Activated CD8-positive, alpha-beta T cell treated with anti-CD3 and anti-CD28 coated beads for 36 hours (primary cell): ENCODE measurements at regions of chr7 and their contacts with region 1.

Region 1: DNA sequence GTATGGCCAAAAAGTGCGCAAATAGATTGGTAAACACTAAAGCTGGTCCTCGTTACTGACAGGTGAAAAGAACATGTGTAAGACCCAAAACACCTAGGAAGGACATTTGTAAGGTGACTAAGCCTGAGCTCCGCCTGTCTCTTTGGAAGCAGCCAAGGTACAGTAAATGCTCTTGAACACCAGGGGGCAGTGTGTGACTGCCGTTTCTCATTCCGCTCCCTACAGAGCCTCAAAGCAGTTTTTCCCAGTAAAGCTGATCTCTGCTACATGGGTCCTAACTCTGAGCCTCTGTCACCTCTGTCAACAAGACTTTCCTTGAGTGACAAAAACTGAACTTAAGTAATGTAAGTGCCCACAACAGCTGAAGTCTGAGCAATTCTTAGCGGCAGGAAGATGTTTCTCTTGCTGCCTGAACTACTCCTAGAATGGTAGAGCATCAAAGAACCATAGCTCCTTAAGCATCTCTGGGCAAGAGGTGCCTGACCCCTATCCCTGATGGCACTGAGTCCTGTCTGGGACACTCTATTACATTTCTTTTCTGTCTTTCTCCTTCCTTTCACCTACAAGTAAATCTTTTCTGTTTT is 238.0 kb upstream of the INHBA start:
- DNase-seq: peak; percentile 60
- ATAC-seq: peak; percentile 83
- H3K4me3 Mint-ChIP-seq: no peak overlapping the region
- H3K27ac Mint-ChIP-seq: no peak overlapping the region
- H3K4me1 Mint-ChIP-seq: peaks cover 8% of the 10 kb centered on the region
- H3K27me3 Mint-ChIP-seq: peaks cover 37% of the 10 kb centered on the region
- CTCF ChIP-seq: peak; percentile 73

Region 2: DNA sequence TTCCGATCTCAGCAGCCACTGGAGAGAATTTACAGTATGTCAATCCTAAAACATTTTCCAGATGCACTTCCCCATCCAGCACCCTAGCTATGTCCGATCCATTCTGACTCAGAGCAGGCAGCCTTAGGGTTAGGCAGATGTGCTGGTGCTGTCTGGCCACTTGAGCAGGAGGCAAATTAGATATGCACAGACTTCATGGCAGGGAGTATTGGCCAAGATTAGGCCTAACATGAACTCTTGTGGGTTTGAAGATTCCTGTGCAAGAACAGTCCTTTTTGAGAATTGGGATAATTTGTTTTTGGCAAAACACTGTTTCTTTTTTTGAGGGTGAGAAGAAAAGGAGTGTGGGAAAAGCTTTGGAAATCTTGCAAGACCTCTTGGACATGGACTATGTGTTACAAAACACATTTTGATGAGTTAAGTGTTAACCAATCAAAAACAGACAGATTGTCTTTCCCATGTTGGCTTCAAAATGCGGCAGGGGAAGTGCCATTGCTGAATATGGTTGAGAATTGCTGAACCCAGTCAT is 19.3 kb before region 1 on chr7:
- CTCF ChIA-PET with region 1: interaction called, 20 read pairs
- POLR2A ChIA-PET with region 1: no interaction called
- intact Hi-C with region 1: no loop called
- DNase-seq: no peak
- ATAC-seq: no peak
- H3K4me3 Mint-ChIP-seq: no peak overlapping the region
- H3K27ac Mint-ChIP-seq: no peak overlapping the region
- H3K4me1 Mint-ChIP-seq: no peaks in the 10 kb centered on the region
- H3K27me3 Mint-ChIP-seq: peaks cover 25% of the 10 kb centered on the region
- CTCF ChIP-seq: no peak

Region 3: GRCh38 chr7:41955893-41956675 is 15.2 kb after region 1 on chr7:
- CTCF ChIA-PET with region 1: interaction called, 14 read pairs
- POLR2A ChIA-PET with region 1: no interaction called
- intact Hi-C with region 1: no loop called
- DNase-seq: no peak
- ATAC-seq: no peak
- H3K4me3 Mint-ChIP-seq: no peak overlapping the region
- H3K27ac Mint-ChIP-seq: no peak overlapping the region
- H3K4me1 Mint-ChIP-seq: no peaks in the 10 kb centered on the region
- H3K27me3 Mint-ChIP-seq: peaks cover 30% of the 10 kb centered on the region
- CTCF ChIP-seq: no peak

Region 4: DNA sequence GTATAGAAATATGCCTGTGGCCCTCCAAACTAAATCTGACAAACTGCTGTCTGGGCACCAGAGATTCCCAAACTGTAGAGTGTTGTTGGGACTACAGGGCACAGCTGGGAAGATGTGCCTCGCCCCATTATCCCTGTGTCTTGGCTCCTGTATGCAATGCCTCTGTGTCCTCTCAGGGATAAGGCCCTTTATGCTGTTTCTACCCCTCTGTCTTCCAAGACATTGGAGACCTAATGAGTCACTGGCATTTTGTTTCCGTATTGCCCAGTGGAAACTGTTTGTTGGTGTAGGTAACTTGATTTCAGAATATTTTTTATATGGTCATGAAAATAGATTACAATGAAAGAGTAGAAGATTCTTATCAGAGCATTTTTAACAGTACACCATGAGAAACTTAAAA is 113.0 kb after region 1 on chr7:
- CTCF ChIA-PET with region 1: no interaction called
- POLR2A ChIA-PET with region 1: no interaction called
- intact Hi-C with region 1: no loop called
- DNase-seq: no peak
- ATAC-seq: no peak
- H3K4me3 Mint-ChIP-seq: no peak overlapping the region
- H3K27ac Mint-ChIP-seq: no peak overlapping the region
- H3K4me1 Mint-ChIP-seq: no peaks in the 10 kb centered on the region
- H3K27me3 Mint-ChIP-seq: peaks cover 4% of the 10 kb centered on the region
- CTCF ChIP-seq: no peak

Region 5: DNA sequence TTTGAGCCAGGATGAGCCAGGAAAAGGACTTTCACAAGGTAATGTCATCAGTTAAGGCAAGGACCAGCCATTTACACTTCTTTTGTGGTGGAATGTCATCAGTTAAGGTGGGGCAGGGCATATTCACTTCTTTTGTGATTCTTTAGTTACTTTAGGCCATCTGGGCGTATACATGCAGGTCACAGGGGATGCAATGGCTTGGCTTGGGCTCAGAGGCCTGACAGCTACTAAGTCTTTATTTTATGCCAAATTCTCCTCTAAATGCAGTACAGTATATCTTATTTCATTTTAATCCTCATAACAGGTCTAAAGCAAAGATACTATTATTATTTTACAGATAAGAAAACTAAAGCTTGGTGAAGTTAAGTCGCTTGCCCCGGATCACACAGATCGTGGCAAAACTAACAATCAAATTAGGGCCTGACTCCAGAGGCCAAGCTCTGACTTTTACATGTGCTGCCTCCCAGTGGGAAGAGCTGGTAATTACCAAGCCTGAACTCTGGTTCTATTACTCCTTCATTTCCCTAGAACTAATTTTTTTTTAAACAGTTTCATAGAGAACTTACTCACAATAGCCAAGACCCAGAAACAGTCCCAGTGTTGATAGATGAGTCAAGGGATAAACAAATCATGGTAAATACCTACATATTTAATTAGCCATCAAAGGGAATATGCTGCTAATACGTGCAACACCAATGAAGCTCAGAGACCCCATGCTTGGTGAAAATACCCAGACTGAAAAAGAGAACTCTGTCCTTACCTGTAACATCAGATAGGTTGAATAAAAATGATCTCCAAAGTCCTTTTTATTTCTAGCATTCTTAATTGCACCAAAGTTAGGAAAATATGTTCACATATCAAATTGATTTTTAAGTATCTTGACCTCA is 935.6 kb after region 1 on chr7:
- CTCF ChIA-PET with region 1: interaction called, 10 read pairs
- POLR2A ChIA-PET with region 1: no interaction called
- intact Hi-C with region 1: loop called (anchors 10 kb)
- DNase-seq: peak; percentile 77
- ATAC-seq: peak; percentile 92
- H3K4me3 Mint-ChIP-seq: no peak overlapping the region
- H3K27ac Mint-ChIP-seq: no peak overlapping the region
- H3K4me1 Mint-ChIP-seq: no peaks in the 10 kb centered on the region
- H3K27me3 Mint-ChIP-seq: peaks cover 6% of the 10 kb centered on the region
- CTCF ChIP-seq: peak; percentile 84